ENCODE measurements at regions of chr19 and their contacts with region 1.

Region 1: DNA sequence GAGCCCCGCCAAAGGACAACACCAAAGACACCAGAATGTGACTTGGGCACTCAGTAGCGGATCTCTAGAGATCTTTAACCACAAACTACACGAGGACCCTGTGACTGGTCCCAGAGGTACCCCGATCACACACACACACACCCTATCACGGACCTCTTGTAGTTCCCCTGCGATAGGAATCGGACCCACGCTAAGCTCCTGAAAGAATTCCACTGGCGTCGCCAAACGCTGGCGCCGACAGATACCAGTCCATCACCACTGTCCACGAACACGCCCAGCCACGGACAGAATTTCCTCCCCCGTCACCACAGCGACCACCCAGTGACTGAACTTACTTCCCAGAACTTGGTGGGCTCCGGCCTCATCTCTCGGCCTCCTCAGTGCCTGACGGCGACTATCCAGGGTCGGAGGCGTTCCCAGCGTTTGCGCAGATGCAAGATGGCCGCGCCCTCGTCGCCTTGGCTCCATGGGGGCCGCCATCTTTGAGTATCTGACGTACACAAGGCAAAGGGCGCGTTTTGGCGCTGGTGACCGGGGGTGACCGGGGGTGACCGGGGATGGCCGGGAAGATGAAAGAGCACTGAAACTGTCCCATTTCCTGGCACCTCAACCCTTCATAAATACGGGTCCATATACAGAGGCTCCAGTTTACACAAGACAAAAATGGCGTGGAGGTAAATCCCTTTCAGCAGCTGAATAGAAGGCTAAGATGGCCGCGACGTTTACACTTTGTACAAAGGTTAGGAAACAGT is at the start of gene ZNF615:
- DNase-seq: peak; percentile 82 to 85 (median 82)
- H3K4me3 ChIP-seq: peak within 1 kb of the TSS; percentile 74 to 84 (median 80)
- H3K4me3 Mint-ChIP-seq: peak within 1 kb of the TSS; percentile 97 to 98
- H3K27ac ChIP-seq: peak within 1 kb of the TSS; percentile 72 to 96
- H3K27ac Mint-ChIP-seq: peak within 1 kb of the TSS; percentile 92 to 99 (median 98)
- H3K4me1 ChIP-seq: peaks cover 7 to 12% of the 10 kb centered on the region in 2 donors
- H3K4me1 Mint-ChIP-seq: peaks cover 15% of the 10 kb centered on the region
- H3K27me3 ChIP-seq: no peaks in the 10 kb centered on the region
- H3K27me3 Mint-ChIP-seq: peaks cover 0 to 3% (median 2%) of the 10 kb centered on the region in 3 donors
- CTCF ChIP-seq: no peak
- polyA plus RNA-seq, gene ZNF615: 1.8 to 2.4 (median 2.2) TPM

Region 2: DNA sequence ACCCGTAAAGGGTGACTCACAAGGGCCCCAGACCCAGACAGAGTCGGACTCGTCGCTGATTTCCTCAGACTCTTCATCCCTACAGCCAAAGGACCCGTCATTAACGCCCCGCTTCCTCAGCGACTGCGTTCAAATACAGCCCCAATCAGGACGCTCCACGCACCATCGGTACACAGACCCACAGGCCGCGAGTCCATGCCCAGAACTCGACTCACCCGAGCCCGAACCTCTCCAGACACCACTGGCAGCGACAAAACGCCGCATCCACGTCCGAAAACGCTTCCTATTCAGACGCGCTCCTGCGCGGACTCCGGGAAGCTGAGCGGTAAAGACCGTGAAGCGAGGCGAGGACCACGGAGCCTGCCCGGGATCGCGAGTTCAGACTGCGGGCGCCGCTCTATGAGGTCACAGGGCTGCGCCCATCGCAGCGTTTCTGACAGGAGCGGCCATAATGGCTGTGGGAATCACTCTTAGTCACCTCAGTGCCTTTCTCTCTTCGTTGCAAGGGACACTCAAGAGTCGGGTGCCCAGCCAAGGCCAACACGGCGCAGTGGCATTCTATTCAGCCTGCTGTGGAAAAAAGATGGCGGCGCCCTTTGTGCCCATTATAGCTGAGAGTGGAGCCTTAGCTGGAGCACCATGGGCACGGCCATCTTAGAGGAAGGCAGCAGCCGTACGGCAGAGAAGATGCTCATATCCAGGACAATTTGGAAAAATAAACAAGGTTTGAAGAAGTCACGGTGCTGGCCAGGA is 20.2 kb after region 1 on chr19 and contains the start of gene ZNF614:
- intact Hi-C with region 1: loop called in 1 of 2 experiments (anchors 1 kb)
- DNase-seq: peak; percentile 85 to 92 (median 87)
- H3K4me3 ChIP-seq: peak within 1 kb of the TSS; percentile 81 to 90 (median 84)
- H3K4me3 Mint-ChIP-seq: peak within 1 kb of the TSS; percentile 92 to 98
- H3K27ac ChIP-seq: peak within 1 kb of the TSS; percentile 95 to 98
- H3K27ac Mint-ChIP-seq: peak within 1 kb of the TSS; percentile 95 to 99 (median 98)
- H3K4me1 ChIP-seq: peaks cover 11 to 17% of the 10 kb centered on the region in 2 donors
- H3K4me1 Mint-ChIP-seq: peaks cover 21% of the 10 kb centered on the region
- H3K27me3 ChIP-seq: no peaks in the 10 kb centered on the region
- H3K27me3 Mint-ChIP-seq: no peaks in the 10 kb centered on the region
- CTCF ChIP-seq: no peak
- polyA plus RNA-seq, gene ZNF614: 0.65 to 3.1 (median 1.0) TPM

Region 3: DNA sequence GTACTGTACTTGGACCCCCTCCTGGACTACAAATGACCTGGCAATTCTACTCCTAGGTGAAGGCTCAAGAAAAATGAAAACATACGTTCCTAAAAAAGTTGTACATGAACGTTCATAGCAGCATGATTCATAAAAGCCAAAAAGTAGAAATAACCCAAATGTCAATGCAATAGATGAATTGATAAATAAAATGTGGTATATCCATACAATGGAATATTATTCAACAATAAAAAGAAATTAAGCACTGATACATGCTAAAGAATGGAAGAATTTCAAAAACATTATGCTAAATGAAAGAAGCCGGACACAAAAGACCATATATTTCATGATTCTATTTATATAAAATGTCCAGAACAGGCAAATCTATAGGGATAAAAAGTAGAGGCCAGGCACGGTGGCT is 31.2 kb after region 1 on chr19:
- intact Hi-C with region 1: loop called in 1 of 2 experiments (anchors 5 kb)
- DNase-seq: no peak
- H3K4me3 ChIP-seq: peak overlapping the region in 1 of 3 experiments; percentile 1
- H3K4me3 Mint-ChIP-seq: no peak overlapping the region
- H3K27ac ChIP-seq: no peak overlapping the region
- H3K27ac Mint-ChIP-seq: no peak overlapping the region
- H3K4me1 ChIP-seq: no peaks in the 10 kb centered on the region
- H3K4me1 Mint-ChIP-seq: no peaks in the 10 kb centered on the region
- H3K27me3 ChIP-seq: no peaks in the 10 kb centered on the region
- H3K27me3 Mint-ChIP-seq: no peaks in the 10 kb centered on the region
- CTCF ChIP-seq: no peak

Region 4: GRCh38 chr19:52048555-52049501 is 40.8 kb after region 1 on chr19 and contains the start of gene ZNF432:
- intact Hi-C with region 1: loop called in 1 of 2 experiments (anchors 5 kb)
- DNase-seq: peak; percentile 92 to 95 (median 94)
- H3K4me3 ChIP-seq: peak within 1 kb of the TSS; percentile 69 to 94 (median 92)
- H3K4me3 Mint-ChIP-seq: peak within 1 kb of the TSS; percentile 98 to 99
- H3K27ac ChIP-seq: peak within 1 kb of the TSS; percentile 93 to 96
- H3K27ac Mint-ChIP-seq: peak within 1 kb of the TSS; percentile 97 to 100 (median 99)
- H3K4me1 ChIP-seq: peaks cover 11 to 13% of the 10 kb centered on the region in 2 donors
- H3K4me1 Mint-ChIP-seq: peaks cover 11% of the 10 kb centered on the region
- H3K27me3 ChIP-seq: no peaks in the 10 kb centered on the region
- H3K27me3 Mint-ChIP-seq: peaks cover 0 to 2% (median 0%) of the 10 kb centered on the region in 3 donors
- CTCF ChIP-seq: no peak
- polyA plus RNA-seq, gene ZNF432: 1.1 to 3.0 (median 1.2) TPM

Measured in CD14-positive monocyte (primary cell).